Thyroid gland (tissue), 4 donors: ENCODE measurements at regions of chr15 and their contacts with region 1.

Region 1: GRCh38 chr15:98647774-98648653 is at the start of gene IGF1R:
- DNase-seq: peak; percentile 85 to 87
- H3K4me3 ChIP-seq: peak within 1 kb of the TSS; percentile 74 to 98 (median 79)
- H3K27ac ChIP-seq: peak within 1 kb of the TSS; percentile 77 to 97 (median 94)
- H3K4me1 ChIP-seq: peaks cover 8 to 17% of the 10 kb centered on the region in 2 donors
- H3K27me3 ChIP-seq: no peaks in the 10 kb centered on the region
- CTCF ChIP-seq: peak in 2 of 6 experiments; percentile 7 to 14
- POLR2A ChIP-seq: peak in 1 of 2 donors; percentile 85
- total RNA-seq, gene IGF1R: 51.5 to 146 (median 89.6) TPM

Region 2: DNA sequence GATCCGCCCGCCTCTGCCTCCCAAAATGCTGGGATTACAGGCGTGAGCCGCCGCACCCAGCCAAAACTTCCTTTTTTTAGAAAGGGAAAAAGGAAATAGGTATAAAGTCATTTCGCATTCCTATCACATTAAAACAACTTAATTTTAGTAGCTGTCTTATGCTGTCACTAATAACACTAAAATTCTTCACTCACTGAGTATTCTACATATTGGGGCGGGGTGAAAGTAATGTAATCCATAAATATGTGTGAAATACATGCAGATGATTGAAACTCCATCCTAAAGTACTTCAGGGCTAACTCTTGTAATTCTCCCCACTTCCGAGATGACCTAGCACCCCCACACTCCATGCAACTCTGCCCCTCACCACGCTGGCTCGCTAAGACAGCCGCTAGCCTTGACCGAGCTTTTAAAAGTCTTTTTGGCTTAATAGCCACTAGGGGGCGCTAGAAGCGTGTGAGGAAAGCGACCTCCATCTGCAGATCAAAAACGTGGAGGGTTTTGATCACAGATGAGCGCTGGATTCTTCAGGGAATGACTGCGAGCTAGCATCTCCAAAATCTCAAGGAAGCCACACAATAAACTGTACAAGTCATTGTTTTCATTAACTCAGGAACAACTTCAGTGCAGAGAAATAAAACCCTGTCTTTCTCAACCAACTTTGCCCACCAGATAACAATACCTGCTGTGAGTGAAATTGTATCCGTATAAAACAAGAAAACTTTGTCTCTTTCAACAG is 129.0 kb before region 1 on chr15:
- intact Hi-C with region 1: loop called (anchors 5 kb)
- DNase-seq: peak; percentile 41 to 56
- H3K4me3 ChIP-seq: no peak overlapping the region
- H3K27ac ChIP-seq: no peak overlapping the region
- H3K4me1 ChIP-seq: peaks cover 0 to 6% of the 10 kb centered on the region in 2 donors
- H3K27me3 ChIP-seq: no peaks in the 10 kb centered on the region
- CTCF ChIP-seq: peak; percentile 62 to 81 (median 72)
- POLR2A ChIP-seq: no peak

Region 3: DNA sequence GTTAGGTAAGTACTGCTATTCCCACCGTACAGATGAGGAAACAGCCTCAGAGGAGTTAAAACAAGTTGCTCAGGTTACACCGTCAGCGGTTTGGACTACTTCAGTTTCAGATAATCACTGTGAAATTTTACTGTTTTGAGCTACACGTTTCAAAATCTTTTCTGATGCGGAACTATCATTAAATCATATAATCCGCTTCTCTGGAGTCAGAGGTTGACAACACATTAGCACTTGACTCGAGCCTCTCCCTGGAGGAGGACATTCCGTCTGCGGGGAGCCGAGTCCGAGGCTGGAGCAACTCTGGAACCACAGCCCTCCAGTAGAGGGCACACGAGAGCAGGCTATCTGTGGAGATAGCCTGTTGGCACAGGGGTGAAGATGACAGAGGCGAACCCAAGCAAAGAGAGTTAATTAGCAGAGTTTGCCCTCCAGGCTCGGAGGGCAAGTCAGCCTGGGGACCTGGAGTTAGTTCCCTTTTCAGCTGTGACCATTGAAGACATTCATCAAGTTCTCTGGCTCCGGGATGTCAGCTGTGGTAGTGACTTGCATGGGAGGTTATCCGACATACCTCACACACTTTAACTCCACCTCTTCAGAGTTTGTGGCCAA is 131.6 kb after region 1 on chr15:
- intact Hi-C with region 1: loop called (anchors 5 kb)
- DNase-seq: peak; percentile 80 to 90
- H3K4me3 ChIP-seq: no peak overlapping the region
- H3K27ac ChIP-seq: peak overlapping the region; percentile 90 to 92 (median 91)
- H3K4me1 ChIP-seq: peaks cover 36 to 51% of the 10 kb centered on the region in 2 donors
- H3K27me3 ChIP-seq: no peaks in the 10 kb centered on the region
- CTCF ChIP-seq: peak; percentile 56 to 93 (median 88)
- POLR2A ChIP-seq: no peak

Region 4: DNA sequence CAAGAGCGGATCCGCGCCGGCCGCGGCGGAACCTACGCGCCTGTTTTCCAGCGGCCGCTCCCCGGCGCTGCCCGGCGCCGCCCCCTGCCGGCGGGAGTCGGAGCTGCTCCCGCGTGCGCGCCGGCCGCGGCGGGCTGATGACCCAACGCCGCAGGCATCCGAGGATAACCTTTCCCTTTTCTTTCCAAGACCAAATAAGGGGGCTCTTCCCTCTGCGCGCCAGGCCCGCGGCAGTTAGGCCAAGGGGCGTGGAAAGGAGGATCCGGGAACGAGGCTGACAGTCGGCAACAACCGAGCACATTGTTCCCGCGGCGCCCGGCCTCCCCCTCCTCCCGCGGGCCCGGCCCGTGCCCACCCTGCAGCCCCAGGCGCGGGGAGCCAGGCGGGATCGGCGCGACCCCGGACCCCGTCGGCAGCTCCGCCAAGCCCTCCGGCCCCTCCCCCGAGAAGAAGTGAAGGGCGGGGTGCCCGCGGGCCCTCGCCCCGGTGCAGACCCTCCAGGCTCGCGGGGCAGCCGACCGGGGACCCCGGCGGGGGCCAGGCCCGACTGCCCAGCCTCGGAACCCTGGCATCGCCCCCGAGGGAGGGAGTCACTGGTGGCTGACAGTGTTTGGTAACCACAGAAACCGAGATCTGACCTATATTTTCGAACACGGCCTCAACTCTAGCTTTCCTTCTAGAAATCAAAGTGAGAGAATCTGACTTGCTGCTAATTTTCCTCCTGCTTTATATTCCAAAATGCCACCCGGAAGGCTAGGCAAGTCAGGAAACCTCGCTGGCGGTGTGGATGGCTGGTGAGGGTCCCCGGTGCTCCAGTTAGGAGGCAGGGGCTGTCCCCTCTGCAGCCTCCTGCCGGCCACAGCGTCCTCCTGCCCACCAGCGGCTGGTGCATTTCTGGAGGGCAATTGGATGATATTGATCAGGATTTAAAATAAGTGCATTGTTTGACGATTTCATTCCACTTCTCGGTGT is 411.3 kb after region 1 on chr15:
- intact Hi-C with region 1: loop called (anchors 5 kb)
- DNase-seq: peak; percentile 61 to 67
- H3K4me3 ChIP-seq: peak overlapping the region in 2 of 3 donors; percentile 21 to 46
- H3K27ac ChIP-seq: peak overlapping the region; percentile 36 to 58 (median 41)
- H3K4me1 ChIP-seq: peaks cover 0 to 6% of the 10 kb centered on the region in 2 donors
- H3K27me3 ChIP-seq: no peaks in the 10 kb centered on the region
- CTCF ChIP-seq: peak in 5 of 6 experiments; percentile 10 to 88 (median 84)
- POLR2A ChIP-seq: peak in 1 of 2 donors; percentile 23